ENCODE measurements at regions of chr3 and their contacts with region 1.

Region 1: DNA sequence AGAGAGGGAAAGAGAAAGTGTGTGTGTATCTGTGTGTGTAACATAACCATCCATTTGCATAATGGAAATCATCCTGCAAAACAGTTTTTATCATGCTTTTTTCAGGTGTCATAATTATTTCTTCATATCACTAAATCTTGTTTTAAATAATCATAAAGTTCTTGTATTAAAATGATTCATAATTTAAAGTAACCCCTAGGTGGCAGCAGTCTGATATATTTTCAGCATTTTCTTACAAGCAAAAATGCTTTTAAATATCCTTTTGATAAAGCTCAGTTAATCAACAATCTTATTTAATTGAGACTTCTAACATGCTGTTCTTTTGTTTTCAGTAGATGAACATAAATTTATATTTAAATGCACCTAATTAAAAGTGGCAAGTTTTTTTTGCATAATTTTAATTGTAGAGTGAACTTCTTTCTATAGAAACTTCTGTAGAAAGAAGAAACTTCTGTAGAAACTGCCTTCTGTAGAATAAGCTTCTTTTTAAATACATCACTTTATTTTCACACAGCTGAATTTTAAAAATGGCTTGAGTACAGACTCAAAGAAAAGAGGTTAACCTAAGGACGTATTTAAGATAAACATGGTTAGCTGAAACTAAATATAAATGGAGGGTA is 72.5 kb downstream of the OPA1 start:
- DNase-seq: peak in 6 of 9 donors; percentile 4 to 43 (median 24)
- ATAC-seq: no peak
- H3K4me3 ChIP-seq: no peak overlapping the region
- H3K4me3 Mint-ChIP-seq: no peak overlapping the region
- H3K27ac ChIP-seq: no peak overlapping the region
- H3K27ac Mint-ChIP-seq: no peak overlapping the region
- H3K4me1 ChIP-seq: no peaks in the 10 kb centered on the region
- H3K4me1 Mint-ChIP-seq: no peaks in the 10 kb centered on the region
- H3K27me3 ChIP-seq: no peaks in the 10 kb centered on the region
- H3K27me3 Mint-ChIP-seq: no peaks in the 10 kb centered on the region

Region 2: DNA sequence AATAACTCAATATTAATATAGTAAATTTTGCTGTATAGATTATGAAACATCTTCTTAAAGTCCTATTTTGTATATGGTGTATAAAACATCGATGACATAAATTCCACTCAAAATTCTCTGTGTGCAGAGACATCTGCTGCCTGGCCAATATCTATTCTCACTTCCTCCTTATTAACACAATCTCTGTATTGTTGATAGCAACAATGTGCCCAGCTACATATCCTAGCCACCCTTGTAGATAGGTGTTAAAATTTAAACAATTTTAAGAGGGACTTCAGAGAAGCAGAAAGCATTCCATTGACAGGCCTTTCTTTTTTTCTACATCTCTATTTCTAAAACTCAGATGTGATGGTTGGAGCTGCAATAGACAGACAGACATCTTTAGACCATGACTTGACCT is 1010.4 kb before region 1 on chr3:
- CTCF ChIA-PET with region 1: no interaction called
- POLR2A ChIA-PET with region 1: no interaction called
- intact Hi-C with region 1: no loop called
- DNase-seq: no peak
- ATAC-seq: no peak
- H3K4me3 ChIP-seq: no peak overlapping the region
- H3K4me3 Mint-ChIP-seq: no peak overlapping the region
- H3K27ac ChIP-seq: no peak overlapping the region
- H3K27ac Mint-ChIP-seq: no peak overlapping the region
- H3K4me1 ChIP-seq: no peaks in the 10 kb centered on the region
- H3K4me1 Mint-ChIP-seq: no peaks in the 10 kb centered on the region
- H3K27me3 ChIP-seq: no peaks in the 10 kb centered on the region
- H3K27me3 Mint-ChIP-seq: peaks cover 0 to 5% (median 0%) of the 10 kb centered on the region in 5 donors

Region 3: DNA sequence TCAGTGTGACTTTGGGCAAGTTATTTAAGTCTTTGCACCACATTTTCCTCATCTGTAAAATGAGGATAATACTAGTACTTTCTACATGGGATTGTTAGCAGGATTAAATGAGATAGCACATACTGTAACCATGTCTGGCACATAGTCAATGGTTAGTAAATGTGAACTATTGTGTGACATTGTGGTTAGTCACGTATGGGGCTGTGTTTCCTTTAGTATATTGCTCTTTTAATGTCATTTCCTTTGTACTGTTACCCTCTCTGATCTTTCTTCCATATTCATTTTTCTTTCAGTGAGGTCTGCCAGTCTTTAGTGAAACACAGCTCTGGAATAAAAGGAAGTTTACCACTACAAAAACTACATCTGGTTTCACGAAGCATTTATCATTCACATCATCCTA is 51.0 kb before region 1 on chr3:
- CTCF ChIA-PET with region 1: no interaction called
- POLR2A ChIA-PET with region 1: no interaction called
- intact Hi-C with region 1: no loop called
- DNase-seq: peak in 3 of 9 donors; percentile 9 to 31 (median 27)
- ATAC-seq: peak; percentile 75
- H3K4me3 ChIP-seq: no peak overlapping the region
- H3K4me3 Mint-ChIP-seq: peak overlapping the region in 9 of 10 donors; percentile 10 to 79 (median 53)
- H3K27ac ChIP-seq: no peak overlapping the region
- H3K27ac Mint-ChIP-seq: peak overlapping the region; percentile 1 to 81 (median 61)
- H3K4me1 ChIP-seq: peaks cover 0 to 12% of the 10 kb centered on the region in 2 donors
- H3K4me1 Mint-ChIP-seq: peaks cover 17 to 33% (median 25%) of the 10 kb centered on the region in 7 donors
- H3K27me3 ChIP-seq: no peaks in the 10 kb centered on the region
- H3K27me3 Mint-ChIP-seq: no peaks in the 10 kb centered on the region

Region 4: GRCh38 chr3:193788189-193788991 is 122.9 kb after region 1 on chr3:
- CTCF ChIA-PET with region 1: no interaction called
- POLR2A ChIA-PET with region 1: no interaction called
- intact Hi-C with region 1: loop called in 1 of 2 experiments (anchors 10 kb)
- DNase-seq: no peak
- ATAC-seq: peak; percentile 46
- H3K4me3 ChIP-seq: no peak overlapping the region
- H3K4me3 Mint-ChIP-seq: no peak overlapping the region
- H3K27ac ChIP-seq: no peak overlapping the region
- H3K27ac Mint-ChIP-seq: no peak overlapping the region
- H3K4me1 ChIP-seq: no peaks in the 10 kb centered on the region
- H3K4me1 Mint-ChIP-seq: peaks cover 0 to 9% (median 0%) of the 10 kb centered on the region in 7 donors
- H3K27me3 ChIP-seq: no peaks in the 10 kb centered on the region
- H3K27me3 Mint-ChIP-seq: peaks cover 9 to 51% (median 22%) of the 10 kb centered on the region in 5 donors

Measured in naive thymus-derived CD4-positive, alpha-beta T cell (primary cell).